Activated CD4-positive, alpha-beta memory T cell treated with anti-CD3 and anti-CD28 coated beads, Interleukin-2, amount 10 ng/mL, durations not matched to agents 7 days and 5 days (primary cell): ENCODE measurements at regions of chr2 and their contacts with region 1.

Region 1: GRCh38 chr2:130332271-130333073 is 10.2 kb upstream of the IMP4 start:
- DNase-seq: peak; percentile 76
- H3K4me3 Mint-ChIP-seq: no peak overlapping the region
- H3K27ac Mint-ChIP-seq: no peak overlapping the region
- H3K4me1 Mint-ChIP-seq: peaks cover 12% of the 10 kb centered on the region
- H3K27me3 Mint-ChIP-seq: peaks cover 31% of the 10 kb centered on the region

Region 2: DNA sequence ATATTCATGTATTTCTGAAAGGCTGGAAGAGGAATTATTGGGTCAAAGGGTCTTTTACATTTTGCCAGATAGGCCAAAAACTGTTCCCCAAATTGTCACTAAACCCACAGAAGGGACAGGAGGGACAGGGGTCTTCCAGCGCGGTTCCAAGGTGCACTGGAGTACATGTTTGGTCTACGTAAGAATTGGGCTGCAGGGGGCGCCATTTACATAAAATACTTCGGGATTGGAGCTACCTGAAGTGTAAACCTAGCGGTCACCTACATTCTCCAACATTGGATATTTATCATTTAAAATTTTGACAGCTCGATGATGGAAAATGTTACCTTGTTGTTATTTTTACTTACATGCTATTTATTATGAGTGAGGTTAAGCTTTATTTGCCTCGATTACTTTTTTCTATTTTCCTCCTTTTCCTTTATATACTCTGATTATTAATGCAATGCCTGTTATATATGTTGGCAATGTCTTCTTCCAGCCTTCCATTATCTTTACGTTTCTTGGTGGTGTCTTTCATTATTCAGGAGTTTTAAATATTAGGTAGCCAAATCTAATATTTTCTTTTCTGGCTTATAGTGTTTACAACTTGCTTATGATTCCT is 396.0 kb before region 1 on chr2:
- CTCF ChIA-PET with region 1: interaction called, 56 read pairs
- POLR2A ChIA-PET with region 1: interaction called, 3 read pairs
- DNase-seq: no peak
- H3K4me3 Mint-ChIP-seq: no peak overlapping the region
- H3K27ac Mint-ChIP-seq: no peak overlapping the region
- H3K4me1 Mint-ChIP-seq: no peaks in the 10 kb centered on the region
- H3K27me3 Mint-ChIP-seq: peaks cover 29% of the 10 kb centered on the region

Region 3: DNA sequence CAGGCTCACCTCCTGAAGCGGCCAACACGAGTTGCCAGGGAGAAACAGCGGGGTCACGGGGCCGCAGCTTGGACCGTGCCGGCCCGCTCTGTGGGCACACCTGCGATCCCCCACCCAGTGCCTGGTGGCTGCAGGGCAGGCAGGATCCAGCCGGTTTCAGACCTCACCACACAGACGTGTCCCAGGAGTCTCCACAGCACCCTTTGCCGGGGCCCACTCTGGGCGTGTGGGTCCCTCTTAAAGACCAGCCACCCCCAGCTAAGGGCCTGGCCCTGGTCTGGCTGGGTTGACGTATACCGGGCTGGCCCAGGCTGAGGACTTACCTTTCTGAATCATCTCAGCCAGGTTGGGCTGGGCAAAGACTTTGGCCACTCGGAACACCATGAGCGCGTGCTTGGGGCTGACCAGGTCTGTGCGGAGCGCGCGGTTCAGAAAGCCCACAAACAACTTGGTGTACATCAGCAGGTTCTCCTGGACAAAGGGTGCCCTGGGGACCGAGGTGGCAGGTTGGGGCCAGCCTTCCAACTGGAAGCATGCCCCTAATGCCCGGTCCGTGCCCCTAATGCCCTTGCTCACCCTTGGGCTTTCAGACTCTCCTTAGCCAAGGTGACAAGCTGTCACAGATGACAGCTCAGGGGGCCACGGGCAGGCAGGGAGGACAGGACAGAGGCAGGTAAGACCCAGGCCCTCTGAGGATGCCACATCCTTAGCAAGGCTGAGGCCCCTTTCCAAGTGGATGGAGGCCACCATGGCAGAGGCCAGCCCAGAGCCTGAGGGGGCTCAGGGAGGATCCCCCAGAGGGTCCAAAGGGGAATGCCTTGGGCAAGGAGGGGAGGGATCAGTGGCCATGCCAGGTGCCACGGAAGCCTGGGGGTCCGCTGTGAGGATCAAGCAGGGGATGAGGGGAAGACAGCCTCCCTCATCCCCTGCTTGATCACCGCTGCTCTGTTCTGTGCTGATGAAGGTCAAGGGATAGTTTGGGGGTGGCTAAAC is 177.4 kb before region 1 on chr2:
- CTCF ChIA-PET with region 1: interaction called, 12 read pairs
- POLR2A ChIA-PET with region 1: interaction called, 4 read pairs
- DNase-seq: no peak
- H3K4me3 Mint-ChIP-seq: no peak overlapping the region
- H3K27ac Mint-ChIP-seq: no peak overlapping the region
- H3K4me1 Mint-ChIP-seq: peaks cover 21% of the 10 kb centered on the region
- H3K27me3 Mint-ChIP-seq: no peaks in the 10 kb centered on the region

Region 4: GRCh38 chr2:130342533-130343275 is 10.2 kb after region 1 on chr2 and contains the start of gene IMP4:
- CTCF ChIA-PET with region 1: interaction called, 45 read pairs
- POLR2A ChIA-PET with region 1: interaction called, 8 read pairs
- DNase-seq: peak; percentile 97
- H3K4me3 Mint-ChIP-seq: peak within 1 kb of the TSS; percentile 99
- H3K27ac Mint-ChIP-seq: peak within 1 kb of the TSS; percentile 96
- H3K4me1 Mint-ChIP-seq: peaks cover 42% of the 10 kb centered on the region
- H3K27me3 Mint-ChIP-seq: no peaks in the 10 kb centered on the region
- total RNA-seq, gene IMP4: 57.7 to 58.9 TPM